ENCODE measurements at regions of chr7 and their contacts with region 1.

Region 1: DNA sequence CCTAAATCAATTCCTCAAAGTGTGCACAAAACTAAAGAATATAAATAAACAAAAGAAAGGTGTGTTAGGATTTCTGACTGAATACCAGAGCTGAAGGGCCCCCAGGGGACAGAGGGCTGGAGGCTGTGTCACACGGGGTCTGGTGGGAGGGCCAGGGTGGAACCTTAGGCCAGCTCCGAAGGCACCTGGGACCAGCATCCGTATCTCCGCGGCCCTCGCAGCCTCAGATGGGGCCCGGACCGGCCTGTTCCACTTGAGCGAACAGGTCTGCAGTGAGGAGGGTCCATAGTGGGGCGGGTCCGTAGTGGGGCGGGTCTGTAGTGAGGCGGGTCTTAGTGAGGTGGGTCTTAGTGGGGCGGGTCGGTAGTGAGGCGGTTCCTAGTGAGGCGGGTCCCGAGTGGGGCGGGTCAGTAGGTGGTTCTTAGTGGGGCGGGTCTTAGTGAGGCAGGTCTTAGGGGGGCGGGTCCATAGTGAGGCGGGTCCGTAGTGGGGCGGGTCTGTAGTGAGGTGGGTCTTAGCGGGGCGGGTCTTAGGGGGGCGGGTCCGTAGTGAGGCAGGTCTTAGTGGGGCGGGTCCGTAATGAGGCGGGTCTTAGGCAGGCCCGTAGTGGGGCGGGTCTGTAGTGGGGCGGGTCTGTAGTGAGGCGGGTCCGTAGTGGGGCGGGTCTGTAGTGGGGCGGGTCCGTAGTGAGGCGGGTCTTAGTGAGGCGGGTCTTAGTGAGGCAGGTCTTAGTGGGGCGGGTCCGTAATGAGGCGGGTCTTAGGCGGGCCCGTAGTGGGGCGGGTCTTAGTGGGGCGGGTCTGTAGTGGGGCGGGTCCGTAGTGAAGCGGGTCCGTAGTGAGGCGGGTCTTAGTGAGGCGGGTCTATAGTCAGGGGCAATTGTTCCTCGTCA is 15.1 kb downstream of the GPR146 start:
- DNase-seq: no peak
- H3K4me3 ChIP-seq: peak overlapping the region; percentile 18 to 32
- H3K27ac ChIP-seq: peak overlapping the region; percentile 57 to 77
- H3K4me1 ChIP-seq: peaks cover 0 to 32% (median 19%) of the 10 kb centered on the region in 4 donors
- H3K27me3 ChIP-seq: no peaks in the 10 kb centered on the region
- CTCF ChIP-seq: no peak

Region 2: DNA sequence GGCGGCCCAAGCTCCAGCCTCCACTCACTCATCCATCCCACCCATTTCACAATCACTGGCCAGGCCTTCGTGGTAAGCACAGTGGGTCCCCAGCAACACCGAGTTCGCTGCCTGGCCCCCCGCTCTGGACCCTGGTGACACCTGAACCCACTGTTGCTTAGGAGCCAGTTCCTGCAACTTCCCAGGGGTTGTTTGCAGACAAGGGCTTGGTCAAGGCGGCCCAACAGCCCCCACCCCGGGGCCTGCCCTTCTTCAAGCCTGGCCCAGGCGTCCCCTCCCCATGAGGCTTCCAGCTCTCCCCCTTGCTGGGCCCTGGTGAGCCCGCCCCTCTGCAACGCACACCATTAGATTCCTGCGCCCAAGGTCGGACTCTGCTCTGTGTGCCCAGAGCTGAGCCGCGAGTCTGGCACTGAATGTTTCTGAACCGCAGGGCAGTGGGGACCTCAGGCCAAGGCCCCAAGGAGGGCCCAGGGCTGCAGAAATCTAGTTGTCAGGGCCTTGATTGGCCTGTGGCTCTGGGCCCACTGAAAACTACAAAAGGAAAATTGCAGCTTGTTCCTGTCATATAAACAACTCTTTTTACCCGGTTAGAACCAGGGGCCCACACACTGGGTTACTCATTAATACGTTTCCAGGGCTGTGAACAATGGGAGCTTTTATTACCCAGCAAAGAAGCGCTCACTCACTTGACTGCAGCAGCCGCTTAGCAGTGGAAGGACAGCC is 82.0 kb before region 1 on chr7:
- intact Hi-C with region 1: no loop called
- DNase-seq: no peak
- H3K4me3 ChIP-seq: no peak overlapping the region
- H3K27ac ChIP-seq: no peak overlapping the region
- H3K4me1 ChIP-seq: peaks cover 0 to 27% (median 21%) of the 10 kb centered on the region in 4 donors
- H3K27me3 ChIP-seq: no peaks in the 10 kb centered on the region
- CTCF ChIP-seq: no peak

Region 3: GRCh38 chr7:1015196-1016121 is 44.0 kb before region 1 on chr7:
- intact Hi-C with region 1: no loop called
- DNase-seq: no peak
- H3K4me3 ChIP-seq: no peak overlapping the region
- H3K27ac ChIP-seq: no peak overlapping the region
- H3K4me1 ChIP-seq: peaks cover 0 to 43% (median 5%) of the 10 kb centered on the region in 4 donors
- H3K27me3 ChIP-seq: no peaks in the 10 kb centered on the region
- CTCF ChIP-seq: no peak

Region 4: GRCh38 chr7:1028031-1028770 is 31.2 kb before region 1 on chr7:
- intact Hi-C with region 1: loop called (anchors 2 kb)
- DNase-seq: peak; percentile 86 to 95
- H3K4me3 ChIP-seq: peak overlapping the region; percentile 68 to 88
- H3K27ac ChIP-seq: peak overlapping the region; percentile 83 to 93
- H3K4me1 ChIP-seq: peaks cover 0 to 43% (median 31%) of the 10 kb centered on the region in 4 donors
- H3K27me3 ChIP-seq: no peaks in the 10 kb centered on the region
- CTCF ChIP-seq: no peak

Measured in tibial artery (tissue), 4 donors.